WTC11 (cell line): ENCODE measurements at regions of chr3 and their contacts with region 1.

Region 1: GRCh38 chr3:138935848-138936740 is 10.8 kb downstream of the FOXL2 start:
- DNase-seq: peak; percentile 91
- ATAC-seq: peak; percentile 61
- H3K4me3 Mint-ChIP-seq: peak overlapping the region; percentile 77
- H3K27ac Mint-ChIP-seq: no peak overlapping the region
- H3K4me1 Mint-ChIP-seq: peaks cover 51% of the 10 kb centered on the region
- H3K27me3 Mint-ChIP-seq: peaks cover 72% of the 10 kb centered on the region
- CTCF ChIP-seq: peak; percentile 96

Region 2: GRCh38 chr3:138434276-138434874 is 501.7 kb before region 1 on chr3 and contains the start of gene ESYT3:
- CTCF ChIA-PET with region 1: interaction called, 17 read pairs
- POLR2A ChIA-PET with region 1: no interaction called
- DNase-seq: peak; percentile 86
- ATAC-seq: peak; percentile 89
- H3K4me3 Mint-ChIP-seq: peak within 1 kb of the TSS; percentile 71
- H3K27ac Mint-ChIP-seq: no peak within 1 kb of the TSS
- H3K4me1 Mint-ChIP-seq: peaks cover 9% of the 10 kb centered on the region
- H3K27me3 Mint-ChIP-seq: peaks cover 75% of the 10 kb centered on the region
- CTCF ChIP-seq: no peak
- total RNA-seq, gene ESYT3: 4.4 to 6.4 TPM (median 5.7 TPM) in 3 replicates

Region 3: GRCh38 chr3:138594150-138594934 is 341.8 kb before region 1 on chr3 and contains the start of gene CEP70:
- CTCF ChIA-PET with region 1: interaction called, 37 read pairs
- POLR2A ChIA-PET with region 1: interaction called, 6 read pairs
- DNase-seq: peak; percentile 95
- ATAC-seq: peak; percentile 93
- H3K4me3 Mint-ChIP-seq: peak within 1 kb of the TSS; percentile 96
- H3K27ac Mint-ChIP-seq: peak within 1 kb of the TSS; percentile 95
- H3K4me1 Mint-ChIP-seq: peaks cover 21% of the 10 kb centered on the region
- H3K27me3 Mint-ChIP-seq: no peaks in the 10 kb centered on the region
- CTCF ChIP-seq: peak; percentile 86
- total RNA-seq, gene CEP70: 27.2 to 34.8 TPM (median 33.5 TPM) in 3 replicates

Region 4: DNA sequence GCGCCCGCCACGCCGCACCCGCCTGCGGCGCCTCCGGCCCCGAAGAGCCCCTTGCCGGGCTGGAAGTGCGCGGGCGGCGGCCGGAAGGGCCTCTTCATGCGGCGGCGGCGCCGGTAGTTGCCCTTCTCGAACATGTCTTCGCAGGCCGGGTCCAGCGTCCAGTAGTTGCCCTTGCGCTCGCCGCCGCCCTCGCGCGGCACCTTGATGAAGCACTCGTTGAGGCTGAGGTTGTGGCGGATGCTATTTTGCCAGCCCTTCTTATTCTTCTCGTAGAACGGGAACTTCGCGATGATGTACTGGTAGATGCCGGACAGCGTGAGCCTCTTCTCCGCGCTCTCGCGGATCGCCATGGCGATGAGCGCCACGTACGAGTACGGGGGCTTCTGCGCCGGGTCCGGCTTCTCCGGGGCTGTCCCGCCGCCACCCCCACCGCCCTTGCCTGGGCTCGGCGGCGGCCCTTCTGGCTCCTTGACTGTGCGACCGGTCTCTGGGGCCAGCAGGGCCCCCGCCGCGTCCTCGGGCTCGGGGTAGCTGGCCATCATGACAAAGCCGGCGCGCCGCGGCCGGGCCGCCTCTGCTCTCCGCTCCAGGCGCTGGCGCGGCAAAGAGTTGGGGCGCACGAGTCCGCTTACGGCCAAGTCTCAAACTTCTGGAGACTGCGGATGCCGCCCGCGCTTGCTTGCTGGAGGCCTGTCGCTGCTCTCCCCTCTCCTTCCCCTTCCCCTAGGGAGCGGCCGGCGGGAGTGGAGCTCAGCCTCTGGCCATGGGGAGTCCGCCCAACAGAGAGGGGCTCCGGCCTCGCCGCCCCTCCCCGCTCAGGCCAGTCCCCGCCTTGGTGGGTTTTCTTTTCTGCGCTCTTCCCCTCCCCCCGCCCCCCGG is 10.3 kb after region 1 on chr3:
- CTCF ChIA-PET with region 1: interaction called, 158 read pairs
- POLR2A ChIA-PET with region 1: interaction called, 10 read pairs
- DNase-seq: peak; percentile 71
- ATAC-seq: peak; percentile 4
- H3K4me3 Mint-ChIP-seq: peak overlapping the region; percentile 61
- H3K27ac Mint-ChIP-seq: no peak overlapping the region
- H3K4me1 Mint-ChIP-seq: peaks cover 63% of the 10 kb centered on the region
- H3K27me3 Mint-ChIP-seq: peaks cover 98% of the 10 kb centered on the region
- CTCF ChIP-seq: peak; percentile 17; the same call in 1 of the 2 replicates

Region 5: DNA sequence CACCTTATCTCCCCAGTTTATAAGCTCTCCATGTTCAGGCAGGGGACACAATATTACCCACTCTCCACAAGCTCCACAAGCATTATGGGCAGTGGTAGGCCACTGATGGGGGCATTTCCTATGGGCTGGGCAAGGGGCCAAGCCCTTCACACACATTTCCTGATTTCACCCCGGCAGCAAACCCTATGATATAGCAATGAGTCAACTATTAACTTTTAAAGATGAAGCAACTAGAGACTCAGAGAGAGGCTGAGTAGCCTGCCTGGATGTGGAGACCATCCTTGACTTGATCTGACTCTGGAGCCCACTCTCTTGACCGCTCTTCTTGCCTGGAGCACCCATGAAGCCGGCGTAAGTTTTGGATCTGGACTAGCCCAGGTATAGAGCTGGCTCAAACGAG is 38.4 kb after region 1 on chr3:
- CTCF ChIA-PET with region 1: interaction called, 59 read pairs
- POLR2A ChIA-PET with region 1: interaction called, 7 read pairs
- DNase-seq: no peak
- ATAC-seq: no peak
- H3K4me3 Mint-ChIP-seq: no peak overlapping the region
- H3K27ac Mint-ChIP-seq: no peak overlapping the region
- H3K4me1 Mint-ChIP-seq: no peaks in the 10 kb centered on the region
- H3K27me3 Mint-ChIP-seq: 0 out of 2 replicates have a peak, but pooled peaks cover 6% of the 10 kb centered on the region
- CTCF ChIP-seq: no peak

Region 6: GRCh38 chr3:139319428-139320402 is 383.6 kb after region 1 on chr3:
- CTCF ChIA-PET with region 1: interaction called, 18 read pairs
- POLR2A ChIA-PET with region 1: no interaction called
- DNase-seq: peak; percentile 83
- ATAC-seq: peak; percentile 98
- H3K4me3 Mint-ChIP-seq: no peak overlapping the region
- H3K27ac Mint-ChIP-seq: no peak overlapping the region
- H3K4me1 Mint-ChIP-seq: peaks cover 10% of the 10 kb centered on the region
- H3K27me3 Mint-ChIP-seq: peaks cover 6% of the 10 kb centered on the region
- CTCF ChIP-seq: no peak